ENCODE measurements at regions of chr10 and their contacts with region 1.

Region 1: DNA sequence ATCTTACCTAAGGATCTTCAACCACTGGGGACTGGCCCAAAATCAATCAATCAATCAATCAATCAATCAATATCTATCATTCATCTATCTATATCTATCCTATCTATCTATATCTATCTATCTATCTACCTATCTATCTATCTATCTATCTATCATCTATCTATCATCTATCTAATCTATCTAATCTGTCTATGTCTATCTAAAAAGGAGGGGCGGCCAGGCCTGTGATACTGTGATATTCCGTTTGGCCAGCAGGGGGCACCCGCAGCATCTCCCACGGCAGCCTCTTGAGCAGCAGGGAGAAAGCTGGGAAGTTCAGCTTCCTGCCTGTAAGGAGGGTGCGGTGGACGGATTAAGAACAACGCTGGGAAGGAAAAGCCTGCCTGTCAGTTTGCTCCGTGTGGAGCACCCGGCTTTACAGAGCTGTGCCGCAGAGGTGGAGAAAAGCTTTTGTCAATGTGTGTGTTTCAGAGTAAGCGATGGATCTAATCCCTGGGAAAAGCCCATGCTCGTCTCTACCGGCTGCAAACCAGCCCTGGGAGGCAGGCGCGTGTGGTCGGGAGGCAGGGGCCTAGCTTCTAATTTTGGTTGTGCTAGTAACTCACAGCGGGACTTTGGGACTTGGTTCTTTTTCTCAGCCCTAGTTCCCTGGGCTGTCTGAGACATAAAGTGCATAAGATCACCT is 125.0 kb downstream of the SH2D4B start:
- DNase-seq: peak; percentile 74
- H3K27ac ChIP-seq: no peak overlapping the region
- CTCF ChIP-seq: peak; percentile 83

Region 2: GRCh38 chr10:80344276-80344675 is 318.4 kb before region 1 on chr10:
- CTCF ChIA-PET with region 1: interaction called, 10 read pairs
- POLR2A ChIA-PET with region 1: no interaction called
- DNase-seq: no peak
- H3K27ac ChIP-seq: no peak overlapping the region
- CTCF ChIP-seq: no peak

Region 3: DNA sequence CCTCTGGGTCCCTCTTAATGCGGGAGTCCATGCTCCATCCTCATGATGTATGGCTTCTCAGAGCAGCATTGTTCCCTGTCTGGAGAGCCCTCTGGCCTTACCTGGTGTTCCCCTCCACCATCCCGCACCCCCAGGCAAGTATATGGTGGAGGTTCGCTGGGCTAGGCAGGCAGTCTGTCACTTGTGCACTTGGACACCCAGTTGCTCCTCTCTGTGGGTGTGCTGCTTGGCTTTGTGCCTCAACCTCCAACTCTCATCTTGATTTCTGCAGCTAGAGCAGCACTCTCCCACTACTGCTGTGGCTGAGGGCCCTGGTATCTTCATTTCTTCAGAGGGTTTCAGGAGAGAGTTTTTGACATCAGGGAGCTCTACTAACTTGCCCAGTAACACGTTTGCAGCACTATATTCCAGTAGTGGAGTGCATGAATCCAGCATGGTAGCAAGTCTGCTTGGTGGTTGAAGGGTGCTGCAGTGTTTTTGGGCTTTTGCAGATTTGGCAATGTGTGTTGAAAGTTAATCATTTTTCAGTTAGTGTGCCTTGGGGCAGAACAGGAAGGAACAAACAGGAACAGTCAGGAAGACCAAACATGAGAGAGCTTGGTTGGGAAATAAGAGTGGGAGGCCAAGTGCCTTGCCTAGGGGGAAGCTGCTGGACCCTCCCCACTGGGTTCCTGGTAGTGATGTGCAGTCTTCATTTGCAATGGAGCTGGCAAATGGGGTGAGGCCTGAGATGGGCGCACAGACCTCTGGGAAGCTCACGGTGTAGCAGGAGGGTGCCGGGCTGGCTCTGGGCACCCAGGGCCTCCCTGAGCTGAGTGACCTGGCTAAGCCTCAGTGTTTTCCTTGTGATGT is 171.2 kb before region 1 on chr10:
- CTCF ChIA-PET with region 1: no interaction called
- POLR2A ChIA-PET with region 1: no interaction called
- DNase-seq: no peak
- H3K27ac ChIP-seq: peak overlapping the region; percentile 39
- CTCF ChIP-seq: no peak

Region 4: DNA sequence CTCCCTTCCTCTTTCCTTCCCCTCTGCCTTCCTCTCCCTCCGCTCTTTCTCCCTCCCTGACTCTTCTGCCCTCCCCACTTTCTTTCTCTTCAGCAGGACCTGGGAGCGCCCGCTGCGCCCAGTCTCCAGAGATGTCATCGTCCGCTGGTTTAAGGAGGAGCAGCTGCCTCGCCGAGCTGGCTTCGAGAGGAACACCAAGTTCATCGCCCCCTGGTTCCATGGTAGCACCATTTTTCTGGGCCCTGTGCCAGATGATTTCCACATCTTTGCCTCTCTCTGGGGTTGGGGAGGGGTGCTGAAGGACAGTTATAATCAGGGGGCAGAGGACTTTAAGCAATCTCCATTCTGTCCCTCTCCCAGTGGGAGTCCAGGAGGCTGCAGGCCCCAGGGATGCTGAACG is 53.4 kb before region 1 on chr10:
- CTCF ChIA-PET with region 1: no interaction called
- POLR2A ChIA-PET with region 1: no interaction called
- DNase-seq: no peak
- H3K27ac ChIP-seq: no peak overlapping the region
- CTCF ChIP-seq: no peak

Region 5: GRCh38 chr10:80647173-80647811 is 15.4 kb before region 1 on chr10:
- CTCF ChIA-PET with region 1: interaction called, 23 read pairs
- POLR2A ChIA-PET with region 1: no interaction called
- DNase-seq: no peak
- H3K27ac ChIP-seq: no peak overlapping the region
- CTCF ChIP-seq: no peak

Region 6: DNA sequence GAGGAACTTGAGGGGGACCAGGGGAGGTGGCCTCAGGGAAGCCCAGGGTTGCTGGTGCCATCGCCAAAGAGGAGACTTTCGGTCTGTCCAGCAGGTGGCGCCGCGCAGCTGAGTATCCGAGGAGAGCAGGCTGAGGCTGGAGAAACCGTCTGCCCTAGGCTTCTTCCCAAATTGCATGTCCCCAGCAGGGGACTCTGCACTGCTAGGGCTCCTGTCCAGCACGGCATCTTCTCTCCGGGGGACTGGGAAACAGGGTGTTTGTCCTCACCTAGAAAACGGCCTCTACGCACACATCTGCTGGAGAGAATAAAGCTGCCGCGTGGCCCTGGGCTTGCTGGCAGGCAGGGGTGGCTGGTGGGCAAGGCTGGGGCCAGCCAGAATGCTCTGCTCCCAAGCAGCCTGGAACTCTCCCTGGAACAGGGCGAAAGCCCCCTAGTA is 36.9 kb after region 1 on chr10:
- CTCF ChIA-PET with region 1: interaction called, 12 read pairs
- POLR2A ChIA-PET with region 1: no interaction called
- DNase-seq: peak; percentile 67
- H3K27ac ChIP-seq: no peak overlapping the region
- CTCF ChIP-seq: peak; percentile 88

Region 7: DNA sequence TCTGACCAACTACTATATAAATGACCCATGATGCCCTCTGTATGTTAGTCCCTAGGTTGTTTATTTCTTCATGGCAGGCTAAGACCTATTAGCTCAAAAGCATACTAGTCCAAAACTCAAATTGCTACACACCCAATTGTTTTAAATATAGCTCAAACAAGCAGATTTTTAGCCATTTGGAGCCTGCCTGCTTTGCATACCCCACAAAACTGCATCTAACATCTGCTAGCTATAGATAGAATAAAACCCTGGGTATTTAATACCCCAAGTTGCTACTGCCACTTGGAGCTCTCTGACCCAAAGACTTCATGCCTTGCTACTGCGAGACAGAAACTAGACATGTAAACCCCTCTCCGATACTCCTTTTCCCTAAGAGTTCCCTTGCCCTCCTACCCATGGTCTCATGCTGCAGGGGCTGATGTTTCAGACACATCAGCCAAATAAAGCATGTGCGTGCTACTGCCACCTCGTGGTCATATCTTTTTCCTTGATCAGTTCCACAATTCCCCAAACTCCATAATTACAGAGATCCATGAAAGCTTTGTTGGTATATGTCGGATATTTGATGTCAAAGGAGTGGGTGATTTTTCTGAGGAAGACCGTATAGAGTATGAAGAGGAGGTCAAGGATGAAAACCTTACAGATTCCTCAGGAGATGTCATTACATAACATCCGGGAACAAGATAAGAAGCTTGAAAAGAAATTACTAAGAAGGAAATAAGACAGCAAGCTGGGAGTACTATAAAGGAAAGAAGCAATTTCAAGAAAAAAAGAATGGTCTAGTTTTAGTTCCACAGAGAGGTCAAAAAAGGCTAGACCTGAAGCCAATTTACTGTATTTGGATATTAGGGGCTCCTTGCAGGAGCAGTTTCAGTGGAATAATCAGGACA is 261.6 kb after region 1 on chr10:
- CTCF ChIA-PET with region 1: interaction called, 11 read pairs
- POLR2A ChIA-PET with region 1: no interaction called
- DNase-seq: peak; percentile 30
- H3K27ac ChIP-seq: no peak overlapping the region
- CTCF ChIP-seq: peak; percentile 65